ENCODE measurements at regions of chr2 and their contacts with region 1.

Region 1: GRCh38 chr2:233053928-233054784 is 6.0 kb upstream of the INPP5D start:
- DNase-seq: peak; percentile 88
- ATAC-seq: no peak

Region 2: GRCh38 chr2:232600053-232600773 is 453.9 kb before region 1 on chr2:
- intact Hi-C with region 1: loop called (anchors 10 kb)
- DNase-seq: no peak
- ATAC-seq: no peak

Region 3: GRCh38 chr2:232854082-232854481 is 200.1 kb before region 1 on chr2:
- intact Hi-C with region 1: loop called (anchors 5 kb)
- DNase-seq: no peak
- ATAC-seq: no peak

Region 4: GRCh38 chr2:232979871-232980461 is 74.2 kb before region 1 on chr2:
- intact Hi-C with region 1: no loop called
- DNase-seq: no peak
- ATAC-seq: no peak

Region 5: DNA sequence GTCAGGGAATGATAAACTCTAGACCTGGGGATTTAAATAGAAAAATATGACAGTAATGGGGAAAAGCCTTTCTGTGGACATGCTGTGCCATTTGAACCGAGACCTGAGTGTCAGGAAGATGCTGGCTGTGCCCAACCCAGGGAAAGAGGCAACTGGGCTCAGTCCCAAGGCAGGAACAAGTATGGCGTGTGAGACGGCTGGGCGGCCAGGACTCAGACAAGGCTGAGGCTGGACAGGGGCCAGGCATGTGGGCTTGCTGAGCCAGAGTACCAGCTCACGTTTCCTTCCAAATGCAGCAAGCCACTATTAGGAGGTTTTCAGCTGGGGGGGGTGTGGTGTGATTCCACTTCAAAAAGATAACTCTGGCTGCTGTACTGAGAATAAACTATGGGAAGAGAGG is 98.4 kb after region 1 on chr2:
- intact Hi-C with region 1: no loop called
- DNase-seq: peak; percentile 87
- ATAC-seq: peak; percentile 94

Measured in Right ventricle myocardium inferior (tissue), 1 donor.